Activated B cell treated with CpG ODN at 0.5 μM for 24 hours (primary cell): ENCODE measurements at regions of chr2 and their contacts with region 1.

Region 1: DNA sequence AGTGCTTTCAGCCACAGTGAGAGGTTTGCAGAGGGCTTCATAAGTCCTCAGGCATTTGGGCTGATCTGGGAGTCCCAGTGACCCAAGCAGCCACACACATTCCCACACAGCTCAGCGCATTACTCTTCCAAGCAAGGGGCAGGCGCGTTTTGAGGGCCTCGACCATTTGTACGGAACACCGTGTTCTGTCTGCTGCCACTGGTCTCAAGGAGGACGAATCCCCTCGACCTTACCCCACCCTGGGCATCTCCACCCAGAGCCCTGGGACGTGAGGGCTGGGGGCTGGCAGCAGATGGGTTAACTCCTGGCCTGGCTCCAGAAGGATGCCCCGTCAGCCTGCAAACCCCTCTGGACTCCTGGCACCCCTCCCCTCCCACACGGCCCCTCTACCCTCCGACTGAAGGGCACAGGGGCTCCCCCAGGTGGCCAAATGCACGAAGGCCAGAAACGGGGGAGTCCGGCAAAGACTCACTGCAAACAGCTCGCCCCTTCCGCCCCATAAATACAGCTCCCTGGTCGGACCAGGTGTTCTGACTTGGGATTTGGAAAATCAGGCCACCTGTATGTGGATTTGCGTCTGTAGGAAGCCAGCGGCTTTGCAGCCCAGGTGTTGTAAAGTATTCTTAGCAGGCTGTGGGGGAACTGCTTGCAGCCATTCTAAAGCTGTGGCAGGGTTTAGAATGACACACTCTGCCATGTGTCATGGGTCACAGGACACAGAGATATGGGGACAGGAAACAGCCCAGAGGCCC is 33.6 kb upstream of the PTMA start:
- DNase-seq: peak; percentile 81
- ATAC-seq: peak; percentile 40
- H3K4me3 Mint-ChIP-seq: peak overlapping the region; percentile 64
- H3K27ac Mint-ChIP-seq: peak overlapping the region; percentile 98
- H3K4me1 Mint-ChIP-seq: peaks cover 77% of the 10 kb centered on the region
- H3K27me3 Mint-ChIP-seq: no peaks in the 10 kb centered on the region
- CTCF ChIP-seq: peak; percentile 83

Region 2: DNA sequence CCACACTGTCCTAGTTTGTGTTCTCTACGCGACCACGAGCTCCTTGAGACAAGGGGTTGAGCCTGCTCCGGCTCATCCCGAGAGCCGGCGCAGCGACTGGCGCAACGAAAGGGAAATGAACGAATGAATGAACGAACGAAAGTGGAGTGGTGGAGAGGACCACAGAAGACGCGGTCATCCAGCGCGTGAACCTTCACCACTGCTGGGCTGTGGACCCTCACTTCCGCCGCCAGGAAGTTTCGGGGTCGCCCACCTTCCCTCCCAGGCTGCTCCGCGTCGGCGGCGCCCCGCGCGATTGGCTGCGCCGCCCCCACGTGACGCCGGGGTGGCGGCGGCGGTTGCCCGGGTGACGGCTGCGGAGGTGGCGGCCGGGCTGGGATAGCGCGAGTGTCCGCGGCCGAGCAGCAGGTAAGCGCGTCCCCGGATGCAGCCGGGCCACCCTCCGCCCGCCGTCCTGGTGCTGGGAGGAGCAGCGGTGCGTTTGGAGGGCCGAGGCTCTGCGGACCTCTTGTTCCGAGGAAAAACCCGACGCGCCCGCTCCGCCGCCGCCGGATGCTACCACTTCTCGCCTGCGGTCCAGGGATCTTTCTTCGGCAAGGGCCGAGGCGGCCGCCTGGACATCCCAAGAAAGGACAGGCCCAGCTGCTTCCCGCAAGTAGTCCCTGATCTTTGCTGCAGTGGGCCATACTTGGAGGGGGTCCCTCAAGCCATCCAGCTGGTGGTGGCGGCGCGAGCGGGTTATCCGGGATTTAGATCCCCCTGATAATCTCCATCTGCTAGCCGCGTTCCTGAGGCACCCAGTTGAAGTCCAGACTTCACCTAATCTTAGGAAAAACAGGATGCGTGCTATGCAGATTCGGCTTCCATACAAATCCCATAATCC is 476.2 kb before region 1 on chr2 and contains the start of gene ARMC9:
- CTCF ChIA-PET with region 1: no interaction called
- POLR2A ChIA-PET with region 1: no interaction called
- intact Hi-C with region 1: no loop called
- DNase-seq: peak; percentile 79
- ATAC-seq: peak; percentile 95
- H3K4me3 Mint-ChIP-seq: peak within 1 kb of the TSS; percentile 93
- H3K27ac Mint-ChIP-seq: peak within 1 kb of the TSS; percentile 68
- H3K4me1 Mint-ChIP-seq: peaks cover 11% of the 10 kb centered on the region
- H3K27me3 Mint-ChIP-seq: peaks cover 6% of the 10 kb centered on the region
- CTCF ChIP-seq: no peak
- total RNA-seq, gene ARMC9: 9.0 and 9.5 TPM in 2 replicates

Region 3: GRCh38 chr2:231604685-231605606 is 69.8 kb before region 1 on chr2:
- CTCF ChIA-PET with region 1: interaction called, 269 read pairs
- POLR2A ChIA-PET with region 1: interaction called, 1,242 read pairs
- intact Hi-C with region 1: no loop called
- DNase-seq: peak; percentile 99
- ATAC-seq: peak; percentile 88
- H3K4me3 Mint-ChIP-seq: peak overlapping the region; percentile 72
- H3K27ac Mint-ChIP-seq: peak overlapping the region; percentile 87
- H3K4me1 Mint-ChIP-seq: peaks cover 31% of the 10 kb centered on the region
- H3K27me3 Mint-ChIP-seq: no peaks in the 10 kb centered on the region
- CTCF ChIP-seq: no peak

Region 4: GRCh38 chr2:231648587-231649174 is 26.1 kb before region 1 on chr2:
- CTCF ChIA-PET with region 1: interaction called, 187 read pairs
- POLR2A ChIA-PET with region 1: interaction called, 528 read pairs
- intact Hi-C with region 1: loop called (anchors 1 kb)
- DNase-seq: peak; percentile 71
- ATAC-seq: peak; percentile 98
- H3K4me3 Mint-ChIP-seq: no peak overlapping the region
- H3K27ac Mint-ChIP-seq: peak overlapping the region; percentile 63
- H3K4me1 Mint-ChIP-seq: peaks cover 8% of the 10 kb centered on the region
- H3K27me3 Mint-ChIP-seq: no peaks in the 10 kb centered on the region
- CTCF ChIP-seq: no peak

Region 5: GRCh38 chr2:231687133-231687852 is 12.5 kb after region 1 on chr2:
- CTCF ChIA-PET with region 1: interaction called, 13 read pairs
- POLR2A ChIA-PET with region 1: interaction called, 87 read pairs
- intact Hi-C with region 1: no loop called
- DNase-seq: peak; percentile 68
- ATAC-seq: peak; percentile 91
- H3K4me3 Mint-ChIP-seq: no peak overlapping the region
- H3K27ac Mint-ChIP-seq: peak overlapping the region; percentile 32
- H3K4me1 Mint-ChIP-seq: peaks cover 39% of the 10 kb centered on the region
- H3K27me3 Mint-ChIP-seq: no peaks in the 10 kb centered on the region
- CTCF ChIP-seq: peak; percentile 39

Region 6: DNA sequence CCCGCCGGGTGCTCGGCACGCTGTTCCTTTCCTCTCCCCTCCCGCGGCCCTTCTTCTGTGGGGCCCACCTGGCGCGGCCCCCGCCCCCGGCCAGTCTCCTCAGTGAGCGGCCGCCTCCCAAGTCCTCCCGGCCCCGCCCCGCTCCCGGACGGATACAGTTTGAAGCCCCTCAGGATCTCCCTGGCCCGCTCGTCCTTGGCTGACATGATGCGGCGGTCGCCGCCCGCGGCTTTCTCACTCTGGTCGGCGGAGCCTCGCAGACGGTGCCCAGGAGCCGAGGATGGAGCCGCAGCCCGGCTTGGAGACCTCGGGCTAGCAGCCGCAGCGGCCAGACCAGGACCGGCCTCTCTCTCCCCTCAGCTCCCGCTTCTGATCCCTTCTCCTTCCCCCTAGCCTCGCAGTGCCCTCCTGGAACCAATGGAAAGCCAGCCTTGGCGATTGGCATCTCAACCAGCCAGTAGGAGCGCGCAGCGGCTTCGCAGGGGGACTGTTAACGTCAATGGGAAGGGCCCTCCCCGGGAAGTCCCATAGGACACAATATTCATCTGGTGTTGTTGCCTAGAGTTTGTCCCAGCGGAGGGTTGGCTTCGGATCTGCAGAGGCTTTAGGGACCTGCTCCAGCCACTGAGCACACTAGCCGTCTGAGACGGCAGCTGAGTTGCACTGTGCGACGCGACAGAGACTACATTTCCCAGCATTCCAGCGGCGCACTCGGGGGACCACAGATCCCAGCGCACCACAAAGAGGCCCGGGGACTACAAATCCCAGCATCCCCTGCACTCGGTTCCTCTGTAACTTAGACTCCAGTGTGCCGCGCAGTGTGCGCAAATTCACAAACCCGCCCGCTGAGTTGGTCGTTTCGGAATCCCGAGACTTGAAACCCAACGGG is 106.4 kb after region 1 on chr2 and contains the start of gene PDE6D:
- CTCF ChIA-PET with region 1: interaction called, 3 read pairs
- POLR2A ChIA-PET with region 1: interaction called, 11 read pairs
- intact Hi-C with region 1: loop called (anchors 1 kb)
- DNase-seq: peak; percentile 95
- ATAC-seq: peak; percentile 89
- H3K4me3 Mint-ChIP-seq: peak within 1 kb of the TSS; percentile 99
- H3K27ac Mint-ChIP-seq: peak within 1 kb of the TSS; percentile 96
- H3K4me1 Mint-ChIP-seq: peaks cover 52% of the 10 kb centered on the region
- H3K27me3 Mint-ChIP-seq: no peaks in the 10 kb centered on the region
- CTCF ChIP-seq: no peak
- total RNA-seq, gene PDE6D: 35.7 and 41.3 TPM in 2 replicates